ENCODE measurements at regions of chr4 and their contacts with region 1.

Region 1: DNA sequence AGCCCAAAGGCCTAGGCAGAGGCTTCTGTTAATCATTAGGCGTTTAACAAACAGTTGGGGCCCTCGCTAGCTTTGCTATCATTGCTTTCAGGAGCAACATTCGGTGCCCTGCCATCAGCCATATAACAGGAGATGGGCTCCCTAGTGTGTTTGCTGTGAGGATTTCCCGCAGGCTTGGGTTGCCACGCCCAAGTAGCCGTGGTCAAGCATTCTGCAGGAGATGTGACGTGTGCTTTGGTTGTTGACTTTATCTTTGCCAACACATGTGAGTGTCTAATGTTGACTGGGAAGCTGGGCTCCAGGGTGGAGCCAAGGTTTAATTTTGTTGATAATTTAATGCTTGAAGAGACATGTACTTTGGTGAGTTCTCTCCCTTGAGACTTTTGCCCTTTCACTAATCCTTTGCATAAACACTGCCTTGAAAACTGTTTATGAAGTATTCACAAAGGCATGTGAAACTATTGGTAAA is 184.6 kb upstream of the KIT start:
- DNase-seq: no peak
- H3K4me3 ChIP-seq: no peak overlapping the region
- H3K27ac ChIP-seq: no peak overlapping the region
- H3K4me1 ChIP-seq: no peaks in the 10 kb centered on the region
- H3K27me3 ChIP-seq: no peaks in the 10 kb centered on the region
- CTCF ChIP-seq: no peak
- EP300 ChIP-seq: no peak
- POLR2A ChIP-seq: no peak

Region 2: GRCh38 chr4:54400802-54401201 is 72.3 kb before region 1 on chr4:
- in situ Hi-C with region 1: no loop called
- intact Hi-C with region 1: loop called (anchors 2 kb)
- DNase-seq: no peak
- H3K4me3 ChIP-seq: no peak overlapping the region
- H3K27ac ChIP-seq: no peak overlapping the region
- H3K4me1 ChIP-seq: peaks cover 0 to 3% (median 0%) of the 10 kb centered on the region in 4 donors
- H3K27me3 ChIP-seq: no peaks in the 10 kb centered on the region
- CTCF ChIP-seq: no peak
- EP300 ChIP-seq: no peak
- POLR2A ChIP-seq: no peak

Measured in transverse colon (tissue), 4 donors.